Ovary (tissue), 10 donors: ENCODE measurements at regions of chr9 and their contacts with region 1.

Region 1: DNA sequence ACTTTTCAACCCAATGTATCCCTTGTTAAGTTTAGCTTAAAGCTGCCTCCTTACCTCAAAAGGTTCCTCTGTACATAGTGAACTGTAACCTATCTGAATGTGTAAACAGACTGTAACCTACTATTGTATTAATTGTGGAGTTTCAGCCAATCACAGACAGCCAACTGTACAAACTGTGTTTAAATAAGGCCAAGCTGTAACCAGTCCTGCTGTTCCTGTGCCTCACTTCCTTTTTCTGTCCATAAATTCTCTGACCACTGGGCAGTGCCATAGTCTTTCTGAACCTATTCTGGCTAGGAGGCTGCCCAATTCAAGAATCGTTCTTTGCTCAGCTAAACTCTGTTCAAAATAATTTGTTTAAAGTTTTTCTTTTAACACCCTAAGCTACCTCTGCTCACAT is 74.7 kb upstream of the DAPK1 start:
- DNase-seq: no peak
- H3K4me3 ChIP-seq: no peak overlapping the region
- H3K27ac ChIP-seq: no peak overlapping the region
- H3K4me1 ChIP-seq: no peaks in the 10 kb centered on the region
- H3K27me3 ChIP-seq: no peaks in the 10 kb centered on the region
- CTCF ChIP-seq: no peak
- EP300 ChIP-seq: no peak
- POLR2A ChIP-seq: no peak

Region 2: GRCh38 chr9:87479801-87480201 is 56.8 kb after region 1 on chr9:
- intact Hi-C with region 1: loop called in 1 of 4 experiments (anchors 10 kb)
- DNase-seq: no peak
- H3K4me3 ChIP-seq: no peak overlapping the region
- H3K27ac ChIP-seq: no peak overlapping the region
- H3K4me1 ChIP-seq: no peaks in the 10 kb centered on the region
- H3K27me3 ChIP-seq: no peaks in the 10 kb centered on the region
- CTCF ChIP-seq: no peak
- EP300 ChIP-seq: no peak
- POLR2A ChIP-seq: no peak

Region 3: GRCh38 chr9:87713278-87713987 is 290.4 kb after region 1 on chr9:
- intact Hi-C with region 1: no loop called
- DNase-seq: peak; percentile 75 to 91 (median 81)
- H3K4me3 ChIP-seq: no peak overlapping the region
- H3K27ac ChIP-seq: peak overlapping the region; percentile 49 to 78
- H3K4me1 ChIP-seq: peaks cover 16% of the 10 kb centered on the region
- H3K27me3 ChIP-seq: no peaks in the 10 kb centered on the region
- CTCF ChIP-seq: no peak
- EP300 ChIP-seq: peak; percentile 72
- POLR2A ChIP-seq: peak; percentile 19